AG04449 (cell line): ENCODE measurements at regions of chr3 and their contacts with region 1.

Region 1: DNA sequence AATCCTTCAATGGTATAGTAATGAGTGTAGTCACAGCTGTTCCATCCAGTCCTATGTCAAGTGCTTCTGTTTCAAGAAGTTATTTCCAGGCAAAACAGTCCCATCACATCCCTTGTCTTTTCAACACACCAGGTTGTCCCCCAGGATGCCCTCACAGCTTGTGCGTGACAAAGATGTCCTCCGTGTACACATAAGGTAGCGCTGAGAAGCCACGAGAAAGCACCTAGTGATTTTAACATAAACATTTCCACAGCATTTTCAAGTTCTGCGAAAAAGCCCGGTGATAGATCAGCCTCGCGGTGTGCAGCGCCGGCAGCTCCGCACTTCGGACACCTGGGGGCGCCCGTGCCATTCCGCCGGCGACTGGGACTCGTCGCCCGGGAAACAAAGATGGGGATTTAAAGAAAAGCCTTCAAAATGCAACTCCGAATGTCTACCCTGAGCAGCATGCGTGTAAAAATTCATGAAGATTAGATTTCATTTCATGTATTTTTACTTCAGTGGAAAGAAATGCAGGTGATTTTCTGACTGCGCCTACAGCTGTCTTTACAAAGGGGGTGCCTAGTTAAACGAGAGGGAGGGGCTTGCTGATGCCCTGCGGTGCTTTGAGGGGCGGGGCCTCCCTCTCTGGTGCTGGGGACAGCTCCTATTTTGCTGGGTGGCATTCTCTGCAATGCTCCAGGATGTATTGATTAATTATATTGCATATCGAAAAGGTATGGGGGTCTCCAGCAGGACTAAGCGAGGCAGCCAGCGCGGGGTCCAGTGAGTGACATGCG is 49.9 kb downstream of the KY start:
- DNase-seq: no peak
- H3K4me3 ChIP-seq: peak overlapping the region; percentile 21; the same call in 1 of the 2 replicates
- CTCF ChIP-seq: peak; percentile 96

Region 2: DNA sequence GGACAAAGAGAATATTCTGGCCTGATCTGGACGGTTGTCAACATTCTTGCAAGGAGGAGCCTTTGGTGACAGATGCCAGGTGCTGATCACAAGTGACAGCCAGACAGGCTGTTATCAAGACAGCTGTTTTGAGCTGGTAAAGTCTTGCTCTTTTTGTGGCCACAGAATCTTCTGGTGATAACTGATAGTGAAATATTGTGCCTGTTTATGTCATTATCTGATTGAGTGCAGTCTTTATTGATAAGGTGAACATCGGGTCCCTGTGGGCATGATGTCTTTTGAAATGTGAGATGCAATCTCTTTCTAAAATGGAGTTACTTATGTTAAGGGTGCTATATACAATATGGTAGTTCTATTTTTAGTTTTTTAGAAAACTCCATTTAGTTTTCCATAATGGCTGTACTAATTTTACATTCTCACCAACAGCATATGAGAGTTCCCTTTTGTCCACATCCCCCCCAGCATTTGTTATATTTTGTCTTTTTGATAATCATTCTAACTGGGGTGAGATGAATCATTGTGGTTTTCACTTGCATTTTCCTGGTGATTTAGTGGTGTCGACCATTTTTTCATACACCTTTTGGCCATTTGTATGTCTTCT is 104.3 kb before region 1 on chr3:
- CTCF ChIA-PET with region 1: no interaction called
- POLR2A ChIA-PET with region 1: no interaction called
- DNase-seq: no peak
- H3K4me3 ChIP-seq: no peak overlapping the region
- CTCF ChIP-seq: no peak

Region 3: DNA sequence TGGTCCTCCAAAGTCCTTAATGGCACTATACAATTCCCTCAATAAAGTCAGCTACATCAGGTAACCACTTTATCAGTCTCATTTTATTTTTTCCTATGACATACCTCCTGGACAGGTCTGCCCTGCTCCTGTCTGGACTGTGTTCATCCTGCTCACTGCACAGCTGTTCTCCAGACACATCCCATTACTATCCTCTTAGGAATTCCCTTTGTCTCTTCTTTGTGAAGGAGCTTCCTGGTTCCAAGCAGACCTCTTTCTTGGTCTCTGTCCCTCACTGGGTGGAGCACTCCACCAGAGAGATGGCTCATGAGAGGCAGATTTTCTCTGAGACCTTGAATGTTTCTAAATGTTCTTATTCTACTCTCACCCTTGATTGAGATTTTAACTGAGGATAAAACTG is 10.1 kb before region 1 on chr3:
- CTCF ChIA-PET with region 1: interaction called, 52 read pairs
- POLR2A ChIA-PET with region 1: interaction called, 3 read pairs
- DNase-seq: no peak
- H3K4me3 ChIP-seq: no peak overlapping the region
- CTCF ChIP-seq: no peak

Region 4: DNA sequence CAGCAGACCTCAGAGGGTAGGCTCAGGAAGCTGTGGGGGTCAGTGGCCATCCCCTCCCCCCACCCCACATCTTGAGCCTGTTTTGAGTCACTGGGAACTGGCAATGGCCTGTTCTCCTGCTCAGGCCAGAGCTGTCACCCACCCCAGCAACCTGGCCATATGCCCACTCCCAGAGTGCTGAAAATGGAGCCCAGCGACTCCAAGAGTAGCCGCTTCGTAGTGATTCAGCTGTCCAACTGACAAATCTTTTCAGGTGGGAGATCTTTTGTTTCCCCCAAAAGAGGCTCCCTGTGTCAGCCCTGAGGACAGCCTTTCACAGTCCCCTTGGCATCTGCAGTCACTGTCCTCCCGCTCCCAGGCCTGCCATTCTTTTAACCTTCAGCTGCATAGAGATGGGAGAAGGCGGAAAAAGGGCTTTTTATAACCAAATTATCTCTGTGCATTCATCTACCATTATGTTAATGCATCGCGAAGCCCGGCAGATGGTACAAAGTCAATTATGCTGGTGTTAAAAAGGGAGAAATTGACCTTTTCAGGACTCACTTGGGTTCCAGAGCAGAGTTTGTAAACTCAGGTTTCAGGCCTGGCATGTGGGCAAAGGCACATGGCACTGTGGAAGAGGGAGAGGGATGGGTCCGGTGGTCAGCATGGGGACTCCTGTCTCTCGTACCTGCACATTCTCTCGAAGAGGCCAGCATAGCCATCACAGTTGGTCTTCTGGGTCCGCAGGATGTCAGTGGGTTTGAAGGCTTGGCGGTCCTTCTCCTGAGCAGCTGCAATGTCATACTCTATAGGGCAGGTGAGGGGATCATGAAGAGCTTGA is 17.8 kb after region 1 on chr3:
- CTCF ChIA-PET with region 1: interaction called, 14 read pairs
- POLR2A ChIA-PET with region 1: no interaction called
- DNase-seq: no peak
- H3K4me3 ChIP-seq: no peak overlapping the region
- CTCF ChIP-seq: no peak

Region 5: GRCh38 chr3:134640872-134641470 is 40.1 kb after region 1 on chr3:
- CTCF ChIA-PET with region 1: interaction called, 74 read pairs
- POLR2A ChIA-PET with region 1: no interaction called
- DNase-seq: no peak
- H3K4me3 ChIP-seq: no peak overlapping the region
- CTCF ChIP-seq: peak; percentile 69

Region 6: DNA sequence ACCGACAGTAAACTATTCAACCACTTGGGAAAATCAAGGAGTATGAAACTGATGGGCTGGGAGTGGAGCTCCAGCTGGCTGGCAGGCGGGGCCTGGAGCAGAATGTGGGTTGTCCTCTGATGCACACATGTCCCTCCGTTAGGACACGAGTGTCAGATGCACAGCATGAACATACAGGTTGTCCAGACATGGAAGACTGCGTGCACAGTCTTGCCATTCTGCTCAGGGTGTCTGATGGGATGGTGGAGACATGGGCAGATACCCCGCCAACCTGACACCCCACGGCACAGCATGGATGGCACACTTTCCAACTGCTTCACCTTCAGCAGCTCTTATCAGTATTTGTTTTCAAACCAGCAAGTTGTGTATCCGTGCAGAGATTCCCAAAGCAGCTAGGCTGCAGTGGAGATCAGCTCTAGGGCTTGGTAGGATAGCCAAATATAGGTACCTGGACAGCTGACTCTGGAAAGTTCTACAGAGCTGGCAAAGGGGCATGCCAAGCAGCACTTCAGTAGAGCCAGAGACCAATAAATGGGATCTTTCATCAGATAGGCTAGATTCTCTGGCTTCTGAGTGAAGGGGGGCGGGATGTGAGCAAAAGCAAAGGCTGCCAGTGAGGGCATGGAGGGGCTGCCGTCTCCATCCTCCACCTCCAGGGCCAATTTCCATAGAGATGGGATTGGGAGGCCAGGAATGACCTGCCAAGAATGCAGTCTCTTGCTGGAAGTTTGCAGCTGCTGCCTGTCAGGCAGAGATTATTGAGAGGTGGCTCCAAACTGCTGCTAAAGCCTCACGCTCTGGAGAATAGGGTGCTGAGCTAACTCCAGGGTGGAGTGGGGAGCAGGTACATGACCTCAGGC is 97.2 kb after region 1 on chr3:
- CTCF ChIA-PET with region 1: no interaction called
- POLR2A ChIA-PET with region 1: no interaction called
- DNase-seq: no peak
- H3K4me3 ChIP-seq: no peak overlapping the region
- CTCF ChIP-seq: no peak

Region 7: GRCh38 chr3:134794950-134795745 is 194.3 kb after region 1 on chr3 and contains the start of gene EPHB1:
- CTCF ChIA-PET with region 1: interaction called, 32 read pairs
- POLR2A ChIA-PET with region 1: interaction called, 3 read pairs
- DNase-seq: peak; percentile 74
- H3K4me3 ChIP-seq: peak within 1 kb of the TSS; percentile 64
- CTCF ChIP-seq: peak; percentile 94

Region 8: DNA sequence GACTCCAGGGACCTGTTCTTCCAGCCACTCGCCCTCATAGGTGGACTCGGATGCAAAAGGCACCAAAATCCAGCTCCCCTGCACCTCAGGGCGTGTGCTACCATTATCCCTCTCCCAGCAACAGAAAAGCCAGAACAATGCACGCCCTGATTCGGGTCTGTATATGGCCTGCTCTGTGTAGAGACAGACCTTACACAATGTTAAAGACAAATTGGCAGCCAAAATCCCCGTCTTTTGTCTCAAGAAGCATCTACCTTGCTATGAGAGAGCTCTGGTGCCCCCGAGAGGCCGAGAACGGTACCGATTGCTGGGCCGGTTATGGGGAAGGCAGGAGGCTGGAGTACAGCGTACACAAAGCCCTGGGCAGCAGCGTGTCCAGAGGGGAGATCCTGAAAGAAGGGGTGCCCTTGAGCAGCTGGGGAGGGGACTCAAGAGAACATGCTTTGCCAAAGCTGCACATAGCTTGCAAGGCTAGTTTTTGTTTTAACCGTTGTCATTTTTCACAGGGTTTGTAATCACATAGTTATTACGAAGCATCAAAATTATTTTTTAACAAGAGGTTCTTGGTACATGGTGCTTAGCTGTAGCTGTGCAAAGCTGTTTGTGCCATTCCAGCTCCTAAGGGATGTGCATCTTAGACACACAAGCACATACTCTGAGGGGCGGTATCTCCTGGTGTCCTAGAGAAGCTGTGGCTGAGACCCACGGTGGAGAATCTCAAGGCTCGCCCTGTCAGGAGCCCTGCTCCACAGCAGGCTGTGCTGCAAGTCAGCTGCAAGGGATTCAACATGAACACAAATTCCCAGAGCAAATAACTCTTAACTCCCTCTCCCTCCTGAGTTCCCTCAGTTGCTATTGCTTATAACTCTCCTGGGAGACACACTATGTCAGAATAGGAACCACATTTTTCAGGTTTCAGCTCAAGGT is 903.1 kb after region 1 on chr3:
- CTCF ChIA-PET with region 1: interaction called, 10 read pairs
- POLR2A ChIA-PET with region 1: no interaction called
- DNase-seq: no peak
- H3K4me3 ChIP-seq: no peak overlapping the region
- CTCF ChIP-seq: peak; percentile 78

Region 9: GRCh38 chr3:135895106-135895733 is 1294.3 kb after region 1 on chr3:
- CTCF ChIA-PET with region 1: interaction called, 14 read pairs
- POLR2A ChIA-PET with region 1: no interaction called
- DNase-seq: peak; percentile 31
- H3K4me3 ChIP-seq: no peak overlapping the region
- CTCF ChIP-seq: peak; percentile 82